H1 (cell line): ENCODE measurements at regions of chr10 and their contacts with region 1.

Region 1: GRCh38 chr10:34766266-34766600 is 48.9 kb downstream of the PARD3 start:
- DNase-seq: no peak
- H3K4me3 ChIP-seq: no peak overlapping the region
- H3K27ac ChIP-seq: no peak overlapping the region
- H3K4me1 ChIP-seq: peaks cover 7 to 19% (median 14%) of the 10 kb centered on the region in 4 experiments
- H3K27me3 ChIP-seq: no peaks in the 10 kb centered on the region
- CTCF ChIP-seq: no peak
- EP300 ChIP-seq: no peak
- POLR2A ChIP-seq: no peak
- RAD21 ChIP-seq: no peak

Region 2: GRCh38 chr10:34674176-34674575 is 92.1 kb before region 1 on chr10:
- CTCF ChIA-PET with region 1: no interaction called
- POLR2A ChIA-PET with region 1: no interaction called
- DNase-seq: no peak
- H3K4me3 ChIP-seq: no peak overlapping the region
- H3K27ac ChIP-seq: no peak overlapping the region
- H3K4me1 ChIP-seq: peaks cover 0 to 3% (median 1%) of the 10 kb centered on the region in 4 experiments; a peak in 5 of 7 replicates
- H3K27me3 ChIP-seq: no peaks in the 10 kb centered on the region
- CTCF ChIP-seq: no peak
- EP300 ChIP-seq: no peak
- POLR2A ChIP-seq: no peak
- RAD21 ChIP-seq: no peak

Region 3: DNA sequence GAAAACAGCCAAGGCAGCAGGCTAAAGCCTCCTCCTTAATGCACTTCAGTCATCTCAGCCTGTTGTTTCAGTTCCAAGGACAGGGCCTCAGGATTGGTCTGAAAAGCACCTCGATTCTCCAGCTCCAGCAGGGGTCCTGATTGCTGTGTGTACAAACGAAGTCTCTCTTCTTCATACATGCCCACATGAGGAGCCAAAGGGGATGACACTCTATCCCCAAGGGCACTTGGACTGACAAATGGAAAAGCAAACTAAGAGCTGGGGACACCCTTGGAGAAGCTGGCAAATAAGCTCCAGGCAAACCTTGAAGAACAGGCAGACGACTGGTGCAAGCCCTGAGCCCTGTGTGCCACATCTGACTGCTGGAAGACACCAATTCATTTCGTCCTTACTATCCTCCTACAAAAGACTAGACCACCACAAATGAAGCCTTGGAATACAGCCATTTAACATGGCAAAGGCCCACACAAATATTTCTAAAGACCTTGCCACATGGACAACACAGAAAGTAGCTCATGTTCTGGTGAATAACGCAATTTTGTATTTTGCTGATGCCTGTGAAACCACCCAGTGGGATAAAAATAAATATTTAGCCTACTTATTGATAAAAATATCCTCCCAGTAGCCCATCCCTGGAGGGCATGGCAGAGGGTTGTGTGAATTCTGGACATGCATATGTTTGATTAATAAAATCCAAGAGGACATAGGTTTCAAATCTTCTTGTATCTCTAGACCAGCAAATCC is 13.0 kb before region 1 on chr10:
- CTCF ChIA-PET with region 1: interaction called, 19 read pairs
- POLR2A ChIA-PET with region 1: interaction called, 5 read pairs
- DNase-seq: no peak
- H3K4me3 ChIP-seq: no peak overlapping the region
- H3K27ac ChIP-seq: no peak overlapping the region
- H3K4me1 ChIP-seq: peaks cover 0 to 6% (median 3%) of the 10 kb centered on the region in 4 experiments; a peak in 4 of 7 replicates
- H3K27me3 ChIP-seq: no peaks in the 10 kb centered on the region
- CTCF ChIP-seq: no peak
- EP300 ChIP-seq: no peak
- POLR2A ChIP-seq: no peak
- RAD21 ChIP-seq: no peak